OCI-LY7 (cell line): ENCODE measurements at regions of chr3 and their contacts with region 1.

Region 1: DNA sequence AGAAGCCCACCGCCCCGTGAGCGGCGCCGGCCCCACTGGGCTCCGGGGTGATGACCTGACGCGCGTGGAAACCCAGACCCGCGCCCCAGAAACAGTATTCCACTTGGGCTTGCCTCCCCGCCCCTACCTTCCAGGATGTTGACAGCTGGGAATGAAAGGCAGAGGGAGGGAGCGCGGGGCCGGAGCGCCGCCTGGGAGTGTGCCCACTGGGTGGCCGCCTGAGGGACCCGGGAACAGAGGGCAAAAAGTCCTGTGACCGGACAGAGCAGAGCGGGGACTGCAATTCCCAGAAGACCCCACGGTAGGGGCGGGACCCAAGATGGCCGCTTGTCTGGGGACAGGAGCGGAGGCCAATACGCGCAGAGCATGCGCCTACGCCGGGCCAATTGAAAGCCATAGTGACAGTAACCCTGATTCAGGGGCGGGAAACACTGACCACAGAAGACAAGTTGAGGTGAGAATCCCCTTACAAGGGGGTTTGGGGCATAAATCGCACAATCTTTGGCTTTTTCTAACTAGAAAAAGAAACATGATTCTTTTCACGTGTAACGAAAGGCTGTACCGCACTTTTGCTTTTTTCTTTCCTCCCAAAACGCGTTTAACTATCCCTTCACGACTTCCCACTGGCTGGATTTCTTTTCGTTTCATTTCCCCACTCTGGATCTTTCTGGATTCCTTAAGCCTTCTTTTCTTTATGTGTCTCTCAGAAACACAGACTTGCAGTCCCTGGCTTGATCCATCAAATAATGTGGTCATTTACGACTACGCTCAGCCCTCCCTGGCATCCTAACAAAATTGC is at the start of gene FHIT:
- DNase-seq: peak; percentile 96
- H3K4me3 ChIP-seq: peak within 1 kb of the TSS; percentile 80
- H3K27ac ChIP-seq: peak within 1 kb of the TSS; percentile 27
- H3K4me1 ChIP-seq: peaks cover 27% of the 10 kb centered on the region
- CTCF ChIP-seq: no peak
- total RNA-seq, gene FHIT: 2.3 and 5.0 TPM in 2 replicates

Region 2: DNA sequence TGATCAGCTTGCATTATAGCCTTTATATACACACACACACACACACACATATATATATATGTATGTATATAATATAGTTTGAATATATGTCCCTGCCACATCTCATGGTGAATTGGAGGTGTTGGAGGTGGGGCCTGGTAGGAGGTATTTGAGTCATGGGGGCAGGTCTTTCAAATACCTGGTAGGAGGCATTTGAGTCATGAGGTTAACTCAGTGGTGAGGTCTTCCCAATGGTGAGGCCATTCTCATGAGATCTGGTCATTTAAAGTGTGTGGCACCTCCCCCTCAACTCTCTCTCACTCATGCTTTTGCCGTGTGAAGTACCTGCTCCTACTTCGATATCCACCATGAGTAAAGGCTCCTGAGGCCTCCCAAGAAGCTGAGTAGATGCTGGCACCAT is 27.3 kb after region 1 on chr3:
- CTCF ChIA-PET with region 1: no interaction called
- POLR2A ChIA-PET with region 1: no interaction called
- intact Hi-C with region 1: no loop called
- DNase-seq: no peak
- H3K4me3 ChIP-seq: no peak overlapping the region
- H3K27ac ChIP-seq: no peak overlapping the region
- H3K4me1 ChIP-seq: no peaks in the 10 kb centered on the region
- CTCF ChIP-seq: no peak

Region 3: GRCh38 chr3:61360297-61360965 is 109.1 kb after region 1 on chr3:
- CTCF ChIA-PET with region 1: no interaction called
- POLR2A ChIA-PET with region 1: no interaction called
- intact Hi-C with region 1: loop called (anchors 5 kb)
- DNase-seq: no peak
- H3K4me3 ChIP-seq: no peak overlapping the region
- H3K27ac ChIP-seq: no peak overlapping the region
- H3K4me1 ChIP-seq: no peaks in the 10 kb centered on the region
- CTCF ChIP-seq: no peak

Region 4: GRCh38 chr3:62027796-62028195 is 776.4 kb after region 1 on chr3:
- CTCF ChIA-PET with region 1: no interaction called
- POLR2A ChIA-PET with region 1: no interaction called
- intact Hi-C with region 1: no loop called
- DNase-seq: no peak
- H3K4me3 ChIP-seq: no peak overlapping the region
- H3K27ac ChIP-seq: no peak overlapping the region
- H3K4me1 ChIP-seq: no peaks in the 10 kb centered on the region
- CTCF ChIP-seq: no peak